Activated naive CD4-positive, alpha-beta T cell treated with anti-CD3 and anti-CD28 coated beads, Interleukin-2, amount 10 ng/mL, durations not matched to agents 7 days and 5 days (primary cell): ENCODE measurements at regions of chr4 and their contacts with region 1.

Region 1: DNA sequence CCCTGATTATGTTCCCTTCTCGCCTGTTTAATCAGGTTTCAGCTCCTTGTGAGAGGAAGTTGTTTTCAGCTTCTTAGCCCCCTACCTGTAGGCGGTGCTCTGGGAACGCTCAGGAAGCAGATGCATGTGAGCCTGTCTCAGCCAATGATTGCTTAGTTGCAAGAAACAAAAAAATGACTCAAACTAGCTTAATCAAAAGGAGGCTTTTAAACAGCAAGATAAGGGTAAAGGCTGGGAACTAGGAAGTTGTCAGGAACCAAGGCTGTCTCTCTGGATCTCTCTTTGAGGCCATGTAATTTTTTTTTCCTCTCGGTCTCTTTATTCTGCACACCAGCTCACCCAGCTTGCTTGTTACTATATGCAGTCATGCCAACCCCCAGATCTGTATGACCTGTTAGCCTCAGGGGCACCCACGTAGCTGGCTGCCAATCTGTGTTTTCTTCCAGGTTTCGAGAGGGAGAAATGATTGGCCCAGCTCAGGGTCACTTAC is 109.1 kb downstream of the PTTG2 start:
- DNase-seq: peak; percentile 69
- H3K4me3 Mint-ChIP-seq: no peak overlapping the region
- H3K27ac Mint-ChIP-seq: no peak overlapping the region
- H3K4me1 Mint-ChIP-seq: peaks cover 47% of the 10 kb centered on the region
- H3K27me3 Mint-ChIP-seq: no peaks in the 10 kb centered on the region

Region 2: DNA sequence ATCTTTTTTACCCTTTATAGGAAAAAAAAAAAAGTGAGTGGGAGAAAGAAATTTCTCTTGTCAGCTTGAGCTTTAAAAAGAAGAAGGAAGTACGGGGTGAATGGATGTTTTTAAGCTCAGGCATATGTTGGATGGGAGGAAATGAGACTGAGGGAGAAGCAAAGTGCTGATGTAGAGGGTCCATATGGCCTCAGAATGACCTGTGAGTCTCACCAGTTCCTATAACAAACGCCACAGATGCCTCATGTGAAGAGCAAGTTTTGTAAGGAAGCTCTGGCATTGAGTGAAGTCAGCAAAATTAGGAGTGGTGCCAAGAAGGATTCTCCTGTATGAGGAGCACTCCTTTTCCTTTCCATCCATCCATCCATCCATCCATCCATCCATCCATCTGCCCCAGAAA is 105.5 kb after region 1 on chr4:
- CTCF ChIA-PET with region 1: interaction called, 42 read pairs
- DNase-seq: no peak
- H3K4me3 Mint-ChIP-seq: no peak overlapping the region
- H3K27ac Mint-ChIP-seq: no peak overlapping the region
- H3K4me1 Mint-ChIP-seq: peaks cover 51% of the 10 kb centered on the region
- H3K27me3 Mint-ChIP-seq: peaks cover 28% of the 10 kb centered on the region

Region 3: DNA sequence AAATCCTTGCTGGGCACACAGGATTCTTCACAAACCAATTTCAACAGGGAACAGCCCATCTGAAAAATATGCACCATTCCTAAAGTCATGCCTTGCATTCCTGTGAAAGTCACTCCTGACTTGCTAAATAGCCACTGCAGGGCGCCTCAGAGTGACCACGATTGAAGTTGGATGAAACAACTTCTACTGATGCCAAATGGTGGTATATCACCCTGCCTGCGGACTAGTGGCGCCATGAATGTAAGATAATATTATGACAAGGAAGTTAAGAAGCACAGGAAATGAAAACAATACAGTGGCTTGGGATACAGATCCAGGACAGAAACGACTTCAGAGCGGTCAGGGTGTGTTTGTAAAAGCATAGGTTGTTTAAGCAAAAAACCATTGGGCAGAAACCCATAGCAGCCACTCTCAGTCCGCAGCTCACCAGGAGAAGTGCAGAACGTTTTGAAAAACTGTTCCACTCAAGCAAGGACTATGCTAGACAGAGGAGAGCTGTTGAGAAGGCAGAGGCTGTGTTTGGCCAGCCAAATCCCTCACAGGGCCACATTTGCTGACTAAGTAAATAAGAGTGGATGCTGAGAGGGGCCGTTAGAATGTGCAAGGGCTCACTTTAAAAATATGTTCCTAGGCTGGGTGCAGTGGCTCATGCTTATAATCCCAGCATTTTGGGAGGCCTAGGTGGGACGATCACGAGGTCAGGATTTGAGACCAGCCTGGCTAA is 141.2 kb after region 1 on chr4:
- CTCF ChIA-PET with region 1: no interaction called
- DNase-seq: no peak
- H3K4me3 Mint-ChIP-seq: no peak overlapping the region
- H3K27ac Mint-ChIP-seq: no peak overlapping the region
- H3K4me1 Mint-ChIP-seq: peaks cover 2% of the 10 kb centered on the region
- H3K27me3 Mint-ChIP-seq: peaks cover 20% of the 10 kb centered on the region

Region 4: GRCh38 chr4:38730830-38731646 is 661.7 kb after region 1 on chr4:
- CTCF ChIA-PET with region 1: interaction called, 15 read pairs
- DNase-seq: peak; percentile 87
- H3K4me3 Mint-ChIP-seq: no peak overlapping the region
- H3K27ac Mint-ChIP-seq: no peak overlapping the region
- H3K4me1 Mint-ChIP-seq: peaks cover 33% of the 10 kb centered on the region
- H3K27me3 Mint-ChIP-seq: peaks cover 7% of the 10 kb centered on the region